GM18951 (cell line): ENCODE measurements at regions of chr4 and their contacts with region 1.

Region 1: DNA sequence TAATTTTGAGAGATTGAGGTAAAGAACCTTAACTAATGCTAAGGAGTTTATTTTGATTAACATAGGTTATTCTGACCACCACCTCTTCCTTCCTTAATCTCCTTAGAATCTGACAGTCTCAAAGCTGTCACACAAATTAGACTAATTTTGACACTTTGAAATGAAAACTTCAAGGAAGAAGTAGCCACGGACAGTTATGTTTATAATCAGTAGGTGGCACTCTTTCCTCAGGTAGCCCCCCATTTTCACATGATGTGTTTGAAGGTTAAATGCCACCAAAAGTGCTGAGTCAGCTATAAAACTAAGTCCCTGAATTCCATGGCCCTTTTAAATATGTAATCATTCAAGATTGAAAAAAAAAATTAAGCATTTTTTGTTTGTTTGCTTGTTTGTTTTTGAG is 22.4 kb downstream of the TMEM33 start:
- POLR2A ChIP-seq: no peak

Region 2: DNA sequence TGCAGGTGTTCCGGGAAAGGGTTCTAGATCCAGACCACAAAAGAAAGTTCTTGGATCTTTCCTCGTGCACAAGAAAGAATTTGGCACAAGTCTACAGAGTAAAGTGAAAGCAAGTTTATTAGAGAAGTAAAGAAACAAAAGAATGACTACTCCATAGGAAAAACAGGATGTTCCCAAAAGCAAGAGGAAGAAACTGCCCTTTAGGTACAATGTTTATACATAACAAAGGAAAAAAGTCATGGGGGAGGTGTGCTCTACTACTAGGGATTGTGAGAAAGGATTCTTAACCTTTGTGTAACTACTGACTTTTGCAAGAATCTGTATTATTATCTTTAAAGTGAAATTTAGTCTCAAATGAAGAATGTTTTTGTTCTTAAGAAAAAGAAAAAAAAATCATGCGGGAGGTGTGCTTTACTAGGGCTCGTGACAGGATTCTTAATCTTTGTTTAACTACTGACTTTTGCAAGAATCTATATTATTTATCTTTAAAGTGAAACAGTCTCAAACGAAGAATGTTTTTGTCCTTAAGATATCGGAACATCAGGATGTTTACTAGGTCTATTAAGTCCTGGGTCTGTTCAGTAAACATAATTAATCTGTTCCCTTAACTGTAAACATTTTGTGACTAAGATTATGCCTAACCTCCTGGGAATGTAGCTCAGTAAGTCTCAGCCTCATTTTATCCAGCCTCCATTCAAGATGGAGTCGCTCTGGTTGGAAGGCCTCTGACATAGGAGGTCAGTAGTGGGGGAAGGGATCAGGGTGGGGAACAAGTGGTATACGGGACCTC is 305.3 kb after region 1 on chr4:
- in situ Hi-C with region 1: loop called (anchors 25 kb)
- POLR2A ChIP-seq: no peak